Activated CD4-positive, alpha-beta T cell treated with anti-CD3 and anti-CD28 coated beads, Interleukin-2, amount 10 ng/mL, durations not matched to agents 24 days and 14 days (primary cell): ENCODE measurements at regions of chr5 and their contacts with region 1.

Region 1: GRCh38 chr5:134132372-134133034 is 18.0 kb downstream of the TCF7 start:
- DNase-seq: peak; percentile 93
- H3K4me3 Mint-ChIP-seq: peak overlapping the region; percentile 79
- H3K27ac Mint-ChIP-seq: peak overlapping the region; percentile 91
- H3K4me1 Mint-ChIP-seq: peaks cover 88% of the 10 kb centered on the region
- H3K27me3 Mint-ChIP-seq: peaks cover 8% of the 10 kb centered on the region

Region 2: DNA sequence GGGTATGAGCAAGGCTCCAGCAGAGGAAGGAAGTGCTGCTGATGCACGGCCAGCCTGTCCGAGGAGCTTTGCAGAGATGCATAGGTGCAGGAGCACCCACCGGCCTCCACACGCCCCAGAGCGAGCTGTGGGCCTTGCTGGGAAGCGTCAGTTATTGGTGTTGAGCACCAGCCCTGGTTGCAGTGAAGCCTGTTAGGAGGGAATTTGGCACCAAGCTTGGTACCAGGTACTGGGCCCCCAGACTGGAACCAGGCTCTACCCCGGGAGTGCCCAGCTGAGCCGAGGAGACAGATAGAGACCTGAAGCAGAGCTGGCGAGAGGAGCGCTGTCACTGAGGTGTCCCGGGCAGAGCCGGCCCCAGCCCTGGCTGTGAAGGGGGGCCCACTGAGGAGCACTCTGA is 12.8 kb before region 1 on chr5:
- intact Hi-C with region 1: loop called (anchors 1 kb)
- DNase-seq: peak; percentile 65
- H3K4me3 Mint-ChIP-seq: peak overlapping the region; percentile 79
- H3K27ac Mint-ChIP-seq: peak overlapping the region; percentile 50
- H3K4me1 Mint-ChIP-seq: peaks cover 66% of the 10 kb centered on the region
- H3K27me3 Mint-ChIP-seq: peaks cover 14% of the 10 kb centered on the region

Region 3: DNA sequence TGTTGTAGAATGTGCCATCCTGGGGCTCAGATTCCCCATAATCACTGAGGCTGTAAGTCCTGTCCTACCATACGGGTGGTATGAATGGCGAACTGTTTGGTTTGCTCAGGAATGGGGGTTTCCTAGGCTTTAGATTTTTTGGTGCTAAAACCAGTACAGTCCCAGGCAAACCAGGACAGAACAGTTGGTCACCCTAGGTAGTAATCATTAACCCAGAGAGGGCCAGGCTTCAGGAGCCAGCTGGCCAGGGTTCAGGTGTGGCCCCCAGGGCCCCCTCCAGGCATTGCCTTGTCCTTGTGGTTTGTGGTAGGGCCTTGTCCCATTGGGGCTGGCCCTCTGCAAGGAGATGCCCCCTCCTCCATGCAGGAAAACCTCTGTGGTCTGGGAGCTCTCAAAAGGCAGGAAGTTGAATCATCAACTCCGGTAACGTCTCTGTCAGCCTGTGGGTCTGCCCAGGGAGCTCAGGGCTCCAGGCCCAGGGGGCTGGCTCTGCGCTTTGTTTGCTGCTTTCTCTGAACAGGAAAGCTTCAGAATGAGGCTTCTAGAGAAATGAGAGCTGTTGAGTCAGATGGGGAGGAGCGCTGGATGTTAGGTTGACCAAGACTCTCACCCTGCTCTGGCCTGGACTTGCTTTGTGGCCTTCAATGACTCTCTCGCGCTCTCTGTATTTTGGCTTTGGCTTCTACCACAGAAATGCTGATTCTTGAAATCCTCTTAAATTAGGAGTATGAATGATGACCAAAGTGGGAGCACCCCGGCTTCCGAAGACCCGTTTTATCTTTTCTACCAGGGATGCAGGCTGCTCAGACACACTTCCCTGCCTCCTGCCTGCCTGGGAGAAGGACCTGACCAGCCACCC is 370.8 kb after region 1 on chr5:
- intact Hi-C with region 1: no loop called
- DNase-seq: peak; percentile 91
- H3K4me3 Mint-ChIP-seq: peak overlapping the region; percentile 65
- H3K27ac Mint-ChIP-seq: peak overlapping the region; percentile 95
- H3K4me1 Mint-ChIP-seq: peaks cover 33% of the 10 kb centered on the region
- H3K27me3 Mint-ChIP-seq: no peaks in the 10 kb centered on the region